Activated CD4-positive, alpha-beta T cell treated with anti-CD3 and anti-CD28 coated beads for 36 hours (primary cell): ENCODE measurements at regions of chr14 and their contacts with region 1.

Region 1: GRCh38 chr14:56159066-56159465 is 40.9 kb downstream of the PELI2 start:
- DNase-seq: peak; percentile 18
- ATAC-seq: peak; percentile 33
- H3K4me3 Mint-ChIP-seq: no peak overlapping the region
- H3K27ac Mint-ChIP-seq: no peak overlapping the region
- H3K4me1 Mint-ChIP-seq: peaks cover 8% of the 10 kb centered on the region
- H3K27me3 Mint-ChIP-seq: no peaks in the 10 kb centered on the region

Region 2: DNA sequence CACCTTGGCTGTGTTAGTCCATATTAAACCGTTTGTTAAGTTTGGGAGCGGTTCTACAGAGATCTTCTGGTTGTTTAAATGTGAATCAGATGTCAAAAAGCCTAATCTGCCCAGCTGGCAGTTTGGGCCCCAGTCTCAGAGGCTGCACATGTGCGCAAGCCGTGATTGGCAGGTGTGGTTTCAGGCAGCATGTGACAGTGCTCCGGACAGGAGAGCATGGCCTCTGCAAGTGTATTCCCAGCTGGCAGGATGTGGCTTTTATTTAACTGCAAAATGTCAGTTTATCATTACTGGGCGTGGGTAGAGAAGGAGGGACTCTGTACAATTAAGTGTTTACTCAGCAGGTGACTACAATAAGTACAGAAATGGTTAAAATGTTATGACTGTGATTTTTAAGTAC is 36.6 kb after region 1 on chr14:
- CTCF ChIA-PET with region 1: no interaction called
- POLR2A ChIA-PET with region 1: no interaction called
- intact Hi-C with region 1: loop called in 1 of 2 experiments (anchors 1 kb)
- DNase-seq: peak; percentile 61
- ATAC-seq: peak; percentile 83
- H3K4me3 Mint-ChIP-seq: peak overlapping the region; percentile 6
- H3K27ac Mint-ChIP-seq: peak overlapping the region; percentile 59
- H3K4me1 Mint-ChIP-seq: peaks cover 24% of the 10 kb centered on the region
- H3K27me3 Mint-ChIP-seq: no peaks in the 10 kb centered on the region